ENCODE measurements at regions of chr16 and their contacts with region 1.

Region 1: DNA sequence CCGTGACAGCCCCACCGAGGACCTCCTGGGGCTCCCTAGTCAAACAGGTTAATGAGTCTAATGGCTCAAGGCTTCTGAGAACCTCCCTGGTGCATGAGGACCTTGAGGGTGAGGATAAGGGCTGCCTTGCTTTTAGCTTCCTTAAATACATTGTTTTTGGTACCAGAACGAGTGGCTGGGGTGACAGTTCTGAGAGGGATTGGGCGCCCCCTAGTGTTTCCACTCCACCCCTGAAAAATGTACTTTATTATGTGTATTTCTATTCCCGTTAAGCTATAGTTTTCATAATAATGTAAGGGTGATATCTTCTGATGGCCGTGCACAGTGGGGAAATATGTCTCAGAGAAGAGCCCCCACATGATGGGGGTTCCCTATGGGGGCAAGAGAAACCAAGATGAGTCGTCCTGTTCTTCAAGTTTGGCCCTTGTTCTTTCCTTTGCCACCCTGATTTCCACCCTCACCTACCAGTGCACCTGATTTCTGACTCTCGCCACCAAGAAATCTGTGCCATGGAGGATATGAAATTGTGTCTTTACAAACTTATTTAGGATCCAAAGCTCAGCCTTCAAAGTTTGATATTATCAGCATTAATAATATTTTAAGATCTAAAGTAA is 14.5 kb upstream of the VWA3A start:
- DNase-seq: peak; percentile 46 to 74 (median 62)
- H3K4me3 ChIP-seq: no peak overlapping the region
- H3K4me3 Mint-ChIP-seq: no peak overlapping the region
- H3K27ac ChIP-seq: no peak overlapping the region
- H3K27ac Mint-ChIP-seq: peak overlapping the region in 2 of 8 donors; percentile 50 to 63
- H3K4me1 ChIP-seq: no peaks in the 10 kb centered on the region
- H3K4me1 Mint-ChIP-seq: peaks cover 3 to 6% (median 5%) of the 10 kb centered on the region in 3 donors
- H3K27me3 ChIP-seq: no peaks in the 10 kb centered on the region
- H3K27me3 Mint-ChIP-seq: no peaks in the 10 kb centered on the region

Region 2: DNA sequence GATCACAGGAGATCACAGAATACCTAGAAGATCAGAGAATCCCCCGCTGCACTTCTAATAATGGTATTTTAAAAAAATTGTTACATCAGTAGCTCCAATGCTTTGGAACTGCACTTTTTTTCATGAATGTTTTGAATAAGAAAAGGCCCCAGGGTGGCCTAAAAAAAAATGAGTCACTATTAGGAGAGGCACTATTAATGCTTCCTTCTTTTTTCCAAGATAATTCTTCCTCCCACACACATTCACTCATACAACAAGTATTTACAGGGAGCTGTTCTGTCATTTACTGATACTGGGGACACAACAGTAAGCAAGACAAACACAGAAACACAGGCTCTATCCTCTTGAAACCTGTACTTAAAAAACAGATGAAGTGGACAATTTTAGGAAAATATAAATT is 76.2 kb before region 1 on chr16:
- CTCF ChIA-PET with region 1: interaction called, 57 read pairs
- POLR2A ChIA-PET with region 1: interaction called, 3 read pairs
- DNase-seq: no peak
- H3K4me3 ChIP-seq: no peak overlapping the region
- H3K4me3 Mint-ChIP-seq: peak overlapping the region in 4 of 7 donors; percentile 15 to 59 (median 42)
- H3K27ac ChIP-seq: no peak overlapping the region
- H3K27ac Mint-ChIP-seq: peak overlapping the region in 2 of 8 donors; percentile 66 to 90
- H3K4me1 ChIP-seq: peaks cover 8% of the 10 kb centered on the region
- H3K4me1 Mint-ChIP-seq: peaks cover 11 to 15% (median 15%) of the 10 kb centered on the region in 3 donors
- H3K27me3 ChIP-seq: no peaks in the 10 kb centered on the region
- H3K27me3 Mint-ChIP-seq: no peaks in the 10 kb centered on the region

Region 3: DNA sequence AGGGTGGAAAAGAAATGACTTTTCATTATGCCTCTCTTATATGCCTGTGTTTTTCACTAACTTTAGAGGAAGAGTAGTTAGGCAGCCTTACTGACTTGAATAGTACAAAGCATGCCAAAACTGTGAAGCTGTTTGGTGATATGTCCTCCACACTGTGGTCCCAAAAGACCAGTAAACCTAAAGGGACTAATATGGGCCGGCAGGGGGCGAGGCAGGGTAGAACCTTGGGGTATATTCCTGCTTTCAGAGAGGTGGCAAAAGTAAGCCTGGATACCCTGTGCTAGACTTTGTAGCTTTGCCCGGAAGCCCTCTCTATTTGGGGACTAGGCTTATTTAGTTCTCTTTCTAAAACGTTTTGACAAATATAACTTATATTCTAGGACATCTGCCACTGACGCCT is 21.9 kb before region 1 on chr16:
- CTCF ChIA-PET with region 1: interaction called, 13 read pairs
- POLR2A ChIA-PET with region 1: no interaction called
- DNase-seq: no peak
- H3K4me3 ChIP-seq: no peak overlapping the region
- H3K4me3 Mint-ChIP-seq: no peak overlapping the region
- H3K27ac ChIP-seq: no peak overlapping the region
- H3K27ac Mint-ChIP-seq: no peak overlapping the region
- H3K4me1 ChIP-seq: peaks cover 5% of the 10 kb centered on the region
- H3K4me1 Mint-ChIP-seq: peaks cover 20 to 36% (median 24%) of the 10 kb centered on the region in 3 donors
- H3K27me3 ChIP-seq: no peaks in the 10 kb centered on the region
- H3K27me3 Mint-ChIP-seq: no peaks in the 10 kb centered on the region

Region 4: GRCh38 chr16:22089910-22090309 is 12.1 kb after region 1 on chr16:
- CTCF ChIA-PET with region 1: interaction called, 18 read pairs
- POLR2A ChIA-PET with region 1: no interaction called
- DNase-seq: no peak
- H3K4me3 ChIP-seq: no peak overlapping the region
- H3K4me3 Mint-ChIP-seq: no peak overlapping the region
- H3K27ac ChIP-seq: no peak overlapping the region
- H3K27ac Mint-ChIP-seq: no peak overlapping the region
- H3K4me1 ChIP-seq: no peaks in the 10 kb centered on the region
- H3K4me1 Mint-ChIP-seq: no peaks in the 10 kb centered on the region
- H3K27me3 ChIP-seq: no peaks in the 10 kb centered on the region
- H3K27me3 Mint-ChIP-seq: peaks cover 0 to 1% of the 10 kb centered on the region in 2 donors

Region 5: GRCh38 chr16:22190776-22191531 is 113.1 kb after region 1 on chr16:
- CTCF ChIA-PET with region 1: interaction called, 10 read pairs
- POLR2A ChIA-PET with region 1: no interaction called
- DNase-seq: peak; percentile 98 to 100 (median 99)
- H3K4me3 ChIP-seq: peak overlapping the region; percentile 86
- H3K4me3 Mint-ChIP-seq: peak overlapping the region; percentile 87 to 97 (median 94)
- H3K27ac ChIP-seq: peak overlapping the region; percentile 99
- H3K27ac Mint-ChIP-seq: peak overlapping the region; percentile 98 to 100 (median 99)
- H3K4me1 ChIP-seq: peaks cover 70% of the 10 kb centered on the region
- H3K4me1 Mint-ChIP-seq: peaks cover 59 to 82% (median 69%) of the 10 kb centered on the region in 3 donors
- H3K27me3 ChIP-seq: no peaks in the 10 kb centered on the region
- H3K27me3 Mint-ChIP-seq: peaks cover 0 to 17% of the 10 kb centered on the region in 2 donors